Psoas muscle (tissue), 8 donors: ENCODE measurements at regions of chr17 and their contacts with region 1.

Region 1: GRCh38 chr17:69607162-69607834 is 192.8 kb downstream of the MAP2K6 start:
- DNase-seq: peak; percentile 71 to 86
- ATAC-seq: peak; percentile 72 to 82 (median 74)
- H3K4me3 ChIP-seq: no peak overlapping the region
- H3K27ac ChIP-seq: peak overlapping the region; percentile 92
- H3K4me1 ChIP-seq: peaks cover 35% of the 10 kb centered on the region
- H3K27me3 ChIP-seq: no peaks in the 10 kb centered on the region
- CTCF ChIP-seq: peak; percentile 95

Region 2: GRCh38 chr17:69625474-69625873 is 18.2 kb after region 1 on chr17:
- intact Hi-C with region 1: no loop called
- DNase-seq: no peak
- ATAC-seq: no peak
- H3K4me3 ChIP-seq: no peak overlapping the region
- H3K27ac ChIP-seq: no peak overlapping the region
- H3K4me1 ChIP-seq: no peaks in the 10 kb centered on the region
- H3K27me3 ChIP-seq: no peaks in the 10 kb centered on the region
- CTCF ChIP-seq: no peak

Region 3: GRCh38 chr17:69654981-69655855 is 47.9 kb after region 1 on chr17:
- intact Hi-C with region 1: loop called in 1 of 2 experiments (anchors 5 kb)
- DNase-seq: no peak
- ATAC-seq: peak; percentile 90 to 98 (median 96)
- H3K4me3 ChIP-seq: no peak overlapping the region
- H3K27ac ChIP-seq: peak overlapping the region; percentile 27
- H3K4me1 ChIP-seq: peaks cover 12% of the 10 kb centered on the region
- H3K27me3 ChIP-seq: no peaks in the 10 kb centered on the region
- CTCF ChIP-seq: no peak

Region 4: GRCh38 chr17:69733171-69734012 is 126.1 kb after region 1 on chr17:
- intact Hi-C with region 1: loop called in 1 of 2 experiments (anchors 5 kb)
- DNase-seq: peak; percentile 48 to 83
- ATAC-seq: peak; percentile 99 to 100 (median 100)
- H3K4me3 ChIP-seq: no peak overlapping the region
- H3K27ac ChIP-seq: peak overlapping the region; percentile 73
- H3K4me1 ChIP-seq: peaks cover 39% of the 10 kb centered on the region
- H3K27me3 ChIP-seq: no peaks in the 10 kb centered on the region
- CTCF ChIP-seq: no peak

Region 5: GRCh38 chr17:69949973-69950695 is 342.8 kb after region 1 on chr17:
- intact Hi-C with region 1: loop called in 1 of 2 experiments (anchors 10 kb)
- DNase-seq: no peak
- ATAC-seq: no peak
- H3K4me3 ChIP-seq: no peak overlapping the region
- H3K27ac ChIP-seq: no peak overlapping the region
- H3K4me1 ChIP-seq: peaks cover 14% of the 10 kb centered on the region
- H3K27me3 ChIP-seq: no peaks in the 10 kb centered on the region
- CTCF ChIP-seq: no peak

Region 6: DNA sequence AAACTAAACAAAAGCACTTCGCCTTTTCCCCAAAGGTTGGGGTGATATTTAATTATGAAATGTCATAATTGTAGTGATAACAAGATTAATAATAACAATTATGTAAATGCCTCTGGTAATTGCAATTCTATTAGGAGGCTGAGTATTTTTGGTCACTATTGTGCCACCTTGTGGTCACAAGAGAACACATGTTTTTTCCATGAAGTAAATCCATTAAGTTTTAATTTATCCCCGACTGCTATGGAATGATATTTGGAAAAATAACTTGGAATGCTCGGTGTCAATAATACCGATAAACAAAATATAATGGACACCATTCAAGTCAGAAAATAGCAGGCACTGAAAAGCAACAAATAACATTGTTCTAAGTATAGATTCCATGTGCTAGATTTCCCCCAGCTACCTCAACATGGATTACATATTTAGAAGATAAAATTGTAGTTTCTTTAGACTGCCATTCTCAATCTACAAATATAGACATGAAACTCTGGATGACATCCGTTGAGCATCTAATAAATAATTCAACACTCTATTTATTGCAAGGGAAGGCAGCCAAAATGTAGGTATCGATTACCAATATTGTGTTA is 537.1 kb after region 1 on chr17:
- intact Hi-C with region 1: loop called (anchors 2 to 5 kb)
- DNase-seq: no peak
- ATAC-seq: peak in 1 of 4 donors; percentile 77
- H3K4me3 ChIP-seq: no peak overlapping the region
- H3K27ac ChIP-seq: no peak overlapping the region
- H3K4me1 ChIP-seq: no peaks in the 10 kb centered on the region
- H3K27me3 ChIP-seq: no peaks in the 10 kb centered on the region
- CTCF ChIP-seq: peak; percentile 82

Region 7: DNA sequence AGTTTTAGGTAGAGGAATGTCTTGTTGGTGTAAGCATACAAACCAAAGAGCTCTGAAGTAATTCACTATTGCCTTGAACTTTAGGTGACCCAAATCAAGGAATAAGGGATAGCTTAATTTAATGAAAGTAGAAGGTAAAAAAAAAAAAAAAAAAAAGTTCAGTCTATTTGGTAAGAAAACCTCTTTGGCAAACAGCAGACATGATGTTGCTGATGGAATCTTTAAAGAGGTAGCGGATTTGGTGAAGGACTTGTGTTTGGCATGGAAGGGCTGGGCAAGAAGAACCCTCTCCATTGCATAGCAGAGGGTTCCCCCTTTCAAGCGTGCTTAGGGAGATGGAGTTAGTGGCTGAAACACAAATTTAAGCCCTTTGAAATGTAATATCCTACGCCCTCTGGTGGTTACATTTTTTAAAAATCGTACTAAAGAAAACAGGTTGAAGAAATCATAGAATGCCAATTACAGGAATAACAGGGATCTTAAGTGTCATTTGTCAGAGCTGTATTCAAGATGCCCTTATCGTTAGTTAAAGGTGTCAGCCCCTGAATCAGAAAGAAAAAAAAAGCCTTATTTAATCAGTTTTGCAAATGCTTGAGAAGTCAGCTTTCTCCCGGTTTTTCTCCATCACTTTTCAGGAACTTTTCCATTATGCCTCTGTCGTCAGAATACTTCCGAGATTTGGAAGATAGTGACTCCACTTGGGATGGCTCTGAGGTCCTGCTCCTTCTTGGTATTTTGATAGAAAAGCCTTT is 945.1 kb after region 1 on chr17:
- intact Hi-C with region 1: loop called in 1 of 2 experiments (anchors 5 kb)
- DNase-seq: no peak
- ATAC-seq: peak in 3 of 4 donors; percentile 47 to 75 (median 55)
- H3K4me3 ChIP-seq: no peak overlapping the region
- H3K27ac ChIP-seq: no peak overlapping the region
- H3K4me1 ChIP-seq: no peaks in the 10 kb centered on the region
- H3K27me3 ChIP-seq: no peaks in the 10 kb centered on the region
- CTCF ChIP-seq: peak; percentile 63